Stomach (tissue), 19 donors: ENCODE measurements at regions of chr2 and their contacts with region 1.

Region 1: DNA sequence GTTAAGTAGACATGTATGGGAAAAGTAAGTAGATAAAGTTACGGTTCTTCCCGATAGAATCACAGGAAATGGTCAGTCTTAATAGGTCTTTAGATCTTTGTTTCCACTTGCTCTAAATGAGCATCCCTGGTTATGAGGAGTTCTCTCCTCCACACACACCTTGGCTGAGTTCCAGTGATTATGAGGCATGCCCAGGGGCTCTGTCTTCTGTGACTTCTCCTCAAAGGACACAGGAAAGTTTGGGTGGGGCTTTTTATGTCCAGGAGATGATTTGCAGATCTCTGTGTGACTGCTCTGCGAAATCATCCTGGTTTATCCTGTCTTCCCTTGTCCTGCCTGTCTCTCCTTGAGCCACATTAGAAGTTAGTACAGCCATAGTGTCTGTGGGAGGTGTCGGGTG is 83.9 kb upstream of the EML6 start:
- DNase-seq: no peak
- H3K4me3 ChIP-seq: no peak overlapping the region
- H3K27ac ChIP-seq: peak overlapping the region in 3 of 5 donors; percentile 21 to 57 (median 53)
- H3K4me1 ChIP-seq: peaks cover 33 to 84% (median 58%) of the 10 kb centered on the region in 4 donors
- H3K27me3 ChIP-seq: no peaks in the 10 kb centered on the region
- CTCF ChIP-seq: no peak
- EP300 ChIP-seq: no peak
- POLR2A ChIP-seq: no peak

Region 2: DNA sequence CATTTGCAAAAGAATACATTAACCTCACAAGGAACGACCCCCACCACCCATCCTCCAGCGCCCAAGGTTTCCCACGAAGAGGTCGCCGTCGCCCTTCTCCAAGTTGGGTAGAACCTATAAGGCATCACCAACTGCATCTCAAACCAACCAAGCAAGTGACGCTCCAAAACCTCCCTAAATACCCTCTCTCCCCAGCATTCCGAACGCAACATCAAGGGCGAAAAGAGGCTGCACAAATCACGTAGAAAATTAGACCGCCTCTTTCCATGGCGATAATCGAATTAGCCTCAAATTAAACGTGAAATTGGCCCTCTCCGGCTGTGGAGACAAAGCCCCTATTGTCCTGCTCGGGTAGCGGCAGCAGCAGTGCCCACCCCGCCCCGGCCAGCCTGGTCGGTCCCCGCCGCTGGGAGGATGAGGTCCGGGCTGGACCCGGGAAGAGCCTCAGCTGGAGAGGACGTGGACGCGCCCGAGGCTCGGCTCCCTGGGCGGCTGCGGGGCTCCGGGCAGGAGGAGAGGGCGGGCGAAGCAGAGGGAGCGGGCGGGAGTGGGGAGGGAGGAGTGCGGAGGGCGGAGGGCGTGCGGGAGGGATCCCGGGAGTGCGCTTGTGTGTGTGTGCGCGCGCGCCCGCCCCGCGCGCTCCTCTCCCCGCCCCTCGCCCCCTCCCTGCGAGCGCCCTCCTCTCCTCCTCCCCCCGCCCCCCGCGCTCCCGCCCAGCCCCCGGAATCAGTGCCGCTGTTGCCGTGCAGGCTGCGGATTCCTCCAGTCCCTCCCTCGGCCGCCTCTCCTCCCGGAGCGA is 183.8 kb before region 1 on chr2 and contains the start of gene SPTBN1:
- intact Hi-C with region 1: no loop called
- DNase-seq: peak; percentile 82 to 97
- H3K4me3 ChIP-seq: peak within 1 kb of the TSS; percentile 87 to 99 (median 93)
- H3K27ac ChIP-seq: peak within 1 kb of the TSS; percentile 89 to 95 (median 94)
- H3K4me1 ChIP-seq: peaks cover 0 to 51% (median 37%) of the 10 kb centered on the region in 4 donors
- H3K27me3 ChIP-seq: peaks cover 0 to 28% (median 18%) of the 10 kb centered on the region in 3 donors
- CTCF ChIP-seq: peak in 1 of 7 experiments; percentile 6
- EP300 ChIP-seq: no peak
- POLR2A ChIP-seq: peak in 1 of 4 donors; percentile 25
- total RNA-seq, gene SPTBN1: 155 to 475 (median 267) TPM

Region 3: GRCh38 chr2:54531558-54531957 is 108.1 kb before region 1 on chr2:
- intact Hi-C with region 1: loop called (anchors 10 kb)
- DNase-seq: no peak
- H3K4me3 ChIP-seq: no peak overlapping the region
- H3K27ac ChIP-seq: peak overlapping the region in 2 of 5 donors; percentile 48 to 54
- H3K4me1 ChIP-seq: peaks cover 4 to 59% (median 14%) of the 10 kb centered on the region in 4 donors
- H3K27me3 ChIP-seq: no peaks in the 10 kb centered on the region
- CTCF ChIP-seq: no peak
- EP300 ChIP-seq: no peak
- POLR2A ChIP-seq: no peak